ENCODE measurements at regions of chrX and their contacts with region 1.

Region 1: DNA sequence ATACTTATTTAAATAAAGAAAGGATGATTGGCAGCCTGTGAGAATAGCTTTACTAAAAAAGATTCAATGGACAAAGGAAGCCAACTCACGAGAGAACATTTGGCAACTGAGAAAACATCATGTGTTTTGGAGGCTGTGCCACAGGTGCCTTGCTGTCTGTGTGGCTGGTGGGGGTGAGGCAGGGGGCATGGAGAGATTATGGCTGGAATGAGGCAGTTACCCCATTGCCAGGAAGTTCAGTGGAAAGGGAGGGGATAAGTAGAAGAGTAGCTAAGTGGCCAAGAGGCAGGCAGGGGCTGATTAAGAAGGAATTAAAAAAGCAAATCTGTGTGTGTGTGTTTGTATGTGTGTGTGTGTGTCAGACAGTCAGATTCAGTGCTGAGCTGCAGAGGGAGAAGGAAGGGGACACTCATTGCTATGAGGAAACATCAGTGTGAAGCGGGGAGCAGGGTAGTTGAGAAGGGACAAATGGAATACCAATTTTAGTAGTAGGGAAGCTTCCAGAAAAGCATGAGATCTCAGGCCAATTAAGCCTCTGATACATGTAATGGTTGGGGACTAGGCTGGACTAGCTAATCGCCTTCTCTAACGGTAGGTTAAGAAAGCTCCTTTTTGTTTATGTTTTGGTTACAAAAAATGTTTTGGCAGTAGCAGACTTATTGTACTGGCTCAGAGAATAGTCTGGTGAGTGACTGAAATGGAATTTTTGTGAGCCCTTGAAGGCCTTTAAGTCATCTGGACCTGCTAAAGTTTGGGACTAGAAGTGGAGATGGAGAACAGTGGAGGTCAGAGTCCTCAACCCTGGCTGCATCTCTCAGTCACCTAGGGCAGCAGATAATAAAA is 18.5 kb downstream of the TMEM164 start:
- DNase-seq: no peak
- ATAC-seq: no peak
- H3K4me3 ChIP-seq: no peak overlapping the region
- H3K27ac ChIP-seq: no peak overlapping the region
- H3K4me1 ChIP-seq: peaks cover 15% of the 10 kb centered on the region
- H3K27me3 ChIP-seq: no peaks in the 10 kb centered on the region
- CTCF ChIP-seq: no peak

Region 2: DNA sequence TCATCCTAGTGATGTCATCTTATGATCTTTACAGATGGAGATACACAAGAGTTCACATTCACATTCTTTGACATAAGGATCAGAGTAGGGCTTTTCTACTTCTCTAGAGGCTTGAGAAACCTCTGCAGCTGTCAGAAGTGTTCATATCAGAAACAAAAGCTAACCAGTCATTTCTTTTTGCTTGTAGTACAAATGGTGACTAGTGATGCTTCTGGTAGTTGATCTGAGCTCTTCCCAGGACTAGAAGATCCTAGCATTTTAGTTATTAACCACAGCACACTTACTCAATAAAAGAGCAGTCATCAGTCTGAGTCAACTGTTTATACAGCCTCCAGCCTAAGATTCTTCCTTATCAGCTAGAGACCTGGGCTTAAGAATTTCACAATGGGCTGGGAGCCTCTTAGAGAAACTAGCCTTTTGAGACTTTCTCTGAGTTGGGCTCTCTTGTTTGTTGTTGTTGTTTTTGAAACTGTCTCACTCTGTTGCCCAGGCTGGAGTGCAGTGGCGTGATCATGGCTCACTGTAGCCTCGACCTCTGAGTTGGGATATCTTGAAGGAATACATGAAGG is 65.6 kb after region 1 on chrX:
- CTCF ChIA-PET with region 1: no interaction called
- POLR2A ChIA-PET with region 1: no interaction called
- intact Hi-C with region 1: loop called (anchors 1 kb)
- DNase-seq: peak; percentile 90
- ATAC-seq: peak; percentile 70
- H3K4me3 ChIP-seq: peak overlapping the region; percentile 59; the same call in 1 of the 2 replicates
- H3K27ac ChIP-seq: peak overlapping the region; percentile 100
- H3K4me1 ChIP-seq: peaks cover 45% of the 10 kb centered on the region
- H3K27me3 ChIP-seq: no peaks in the 10 kb centered on the region
- CTCF ChIP-seq: no peak

Region 3: DNA sequence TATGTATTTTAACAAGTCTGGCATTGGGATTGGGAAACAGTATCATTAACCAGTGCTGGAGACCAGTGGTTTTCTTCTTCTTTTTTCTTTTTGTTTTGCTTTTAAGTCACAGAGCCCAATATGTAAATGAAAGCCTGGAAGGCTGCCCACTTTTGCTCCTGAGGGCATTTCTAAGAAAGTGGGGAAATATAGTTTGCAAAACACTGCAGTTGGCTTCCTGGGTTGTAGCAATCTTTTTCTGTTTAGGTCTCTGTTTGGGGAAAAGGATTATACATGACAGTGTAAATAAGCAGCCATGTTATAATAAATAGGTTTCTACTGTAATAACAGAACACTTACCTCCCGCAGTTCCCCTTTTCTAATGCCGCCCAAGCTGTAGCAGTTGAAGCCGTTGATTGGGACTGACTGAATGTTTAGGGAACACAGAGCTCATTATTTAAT is 87.0 kb after region 1 on chrX:
- CTCF ChIA-PET with region 1: no interaction called
- POLR2A ChIA-PET with region 1: no interaction called
- intact Hi-C with region 1: no loop called
- DNase-seq: no peak
- ATAC-seq: no peak
- H3K4me3 ChIP-seq: no peak overlapping the region
- H3K27ac ChIP-seq: no peak overlapping the region
- H3K4me1 ChIP-seq: no peaks in the 10 kb centered on the region
- H3K27me3 ChIP-seq: no peaks in the 10 kb centered on the region
- CTCF ChIP-seq: no peak

Region 4: GRCh38 chrX:110125446-110126162 is 104.2 kb after region 1 on chrX:
- CTCF ChIA-PET with region 1: no interaction called
- POLR2A ChIA-PET with region 1: no interaction called
- intact Hi-C with region 1: loop called (anchors 10 kb)
- DNase-seq: peak; percentile 24
- ATAC-seq: peak; percentile 53
- H3K4me3 ChIP-seq: no peak overlapping the region
- H3K27ac ChIP-seq: no peak overlapping the region
- H3K4me1 ChIP-seq: no peaks in the 10 kb centered on the region
- H3K27me3 ChIP-seq: no peaks in the 10 kb centered on the region
- CTCF ChIP-seq: peak; percentile 49

Measured in PC-3 (cell line).